Activated naive CD4-positive, alpha-beta T cell treated with anti-CD3 and anti-CD28 coated beads, Interleukin-2, amount 10 ng/mL, durations not matched to agents 7 days and 5 days (primary cell): ENCODE measurements at regions of chr1 and their contacts with region 1.

Region 1: GRCh38 chr1:116574581-116575291 is 3.9 kb upstream of the CD58 start:
- DNase-seq: peak; percentile 71
- H3K4me3 Mint-ChIP-seq: no peak overlapping the region
- H3K27ac Mint-ChIP-seq: no peak overlapping the region
- H3K4me1 Mint-ChIP-seq: peaks cover 26% of the 10 kb centered on the region
- H3K27me3 Mint-ChIP-seq: peaks cover 53% of the 10 kb centered on the region

Region 2: DNA sequence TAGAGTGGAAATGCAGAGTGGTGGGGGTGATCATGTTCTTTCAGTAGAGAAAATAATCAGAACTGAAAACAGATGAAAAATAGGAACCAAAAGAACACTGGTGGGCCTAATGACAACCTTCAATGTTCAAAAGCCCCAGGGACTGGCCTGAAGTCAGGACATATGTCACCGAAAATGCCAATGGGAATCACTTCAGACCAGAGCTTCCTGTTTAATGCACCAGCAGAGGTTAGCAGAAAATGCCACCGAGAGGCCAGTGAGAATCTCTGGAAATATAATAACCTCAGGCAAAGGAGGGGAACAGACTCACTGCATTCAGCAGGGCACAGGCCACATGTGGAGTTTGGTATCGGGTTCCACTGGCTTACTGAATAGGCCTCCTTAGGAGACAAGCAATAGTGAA is 12.0 kb after region 1 on chr1:
- CTCF ChIA-PET with region 1: interaction called, 15 read pairs
- DNase-seq: no peak
- H3K4me3 Mint-ChIP-seq: no peak overlapping the region
- H3K27ac Mint-ChIP-seq: no peak overlapping the region
- H3K4me1 Mint-ChIP-seq: peaks cover 9% of the 10 kb centered on the region
- H3K27me3 Mint-ChIP-seq: peaks cover 14% of the 10 kb centered on the region

Region 3: GRCh38 chr1:116674011-116674531 is 99.3 kb after region 1 on chr1:
- CTCF ChIA-PET with region 1: interaction called, 17 read pairs
- DNase-seq: no peak
- H3K4me3 Mint-ChIP-seq: no peak overlapping the region
- H3K27ac Mint-ChIP-seq: no peak overlapping the region
- H3K4me1 Mint-ChIP-seq: no peaks in the 10 kb centered on the region
- H3K27me3 Mint-ChIP-seq: peaks cover 72% of the 10 kb centered on the region

Region 4: DNA sequence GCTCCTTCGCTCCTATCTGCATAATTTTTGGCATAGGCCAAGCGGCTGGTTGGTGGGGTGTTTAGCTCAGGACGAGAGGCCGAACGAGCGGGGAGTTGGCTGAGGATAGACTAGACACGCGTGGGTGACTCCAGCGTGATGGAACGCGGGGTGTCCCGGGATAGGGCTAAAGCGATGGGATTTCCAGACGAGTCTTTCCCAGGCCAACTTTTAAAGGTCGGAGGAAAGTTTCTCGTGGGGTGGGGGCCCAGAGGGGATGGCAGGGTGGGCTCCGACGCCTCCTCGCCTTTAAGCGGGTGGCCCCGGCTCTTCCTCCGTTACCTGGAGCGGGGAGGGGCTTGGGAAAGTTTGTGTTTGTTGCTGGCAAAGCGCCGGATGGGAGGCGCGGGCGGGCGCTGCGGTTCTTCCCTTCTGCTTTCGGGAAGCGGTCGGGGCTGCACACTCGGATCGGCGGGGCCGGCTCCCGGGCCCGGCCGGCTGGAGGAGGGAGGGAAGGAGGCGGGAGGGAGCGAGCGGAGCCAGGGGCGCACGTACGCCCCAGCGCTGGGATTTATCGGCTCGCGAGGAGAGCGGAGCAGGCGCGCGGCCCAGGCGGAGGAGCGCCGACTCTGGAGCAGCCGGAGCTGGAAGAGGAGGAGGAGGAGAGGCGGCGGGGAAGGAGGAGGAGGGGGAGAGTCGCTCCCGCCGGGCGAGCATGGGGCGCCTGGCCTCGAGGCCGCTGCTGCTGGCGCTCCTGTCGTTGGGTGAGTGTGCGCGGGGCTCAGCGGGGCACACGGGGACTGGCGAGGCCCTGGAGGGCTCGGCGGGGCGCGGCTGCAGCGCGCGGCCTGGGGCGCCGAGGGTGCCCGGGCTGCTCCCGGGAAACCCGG is 335.0 kb after region 1 on chr1 and contains the start of gene PTGFRN:
- CTCF ChIA-PET with region 1: no interaction called
- DNase-seq: peak; percentile 35
- H3K4me3 Mint-ChIP-seq: peak within 1 kb of the TSS; percentile 74
- H3K27ac Mint-ChIP-seq: no peak within 1 kb of the TSS
- H3K4me1 Mint-ChIP-seq: peaks cover 4% of the 10 kb centered on the region
- H3K27me3 Mint-ChIP-seq: peaks cover 23% of the 10 kb centered on the region

Region 5: GRCh38 chr1:117059678-117060440 is 485.1 kb after region 1 on chr1 and contains the start of gene TTF2:
- CTCF ChIA-PET with region 1: interaction called, 10 read pairs
- DNase-seq: peak; percentile 97
- H3K4me3 Mint-ChIP-seq: no peak within 1 kb of the TSS
- H3K27ac Mint-ChIP-seq: no peak within 1 kb of the TSS
- H3K4me1 Mint-ChIP-seq: peaks cover 62% of the 10 kb centered on the region
- H3K27me3 Mint-ChIP-seq: no peaks in the 10 kb centered on the region

Region 6: GRCh38 chr1:117128323-117129079 is 553.8 kb after region 1 on chr1:
- CTCF ChIA-PET with region 1: interaction called, 13 read pairs
- DNase-seq: no peak
- H3K4me3 Mint-ChIP-seq: no peak overlapping the region
- H3K27ac Mint-ChIP-seq: no peak overlapping the region
- H3K4me1 Mint-ChIP-seq: no peaks in the 10 kb centered on the region
- H3K27me3 Mint-ChIP-seq: peaks cover 17% of the 10 kb centered on the region